Heart left ventricle (tissue), 16 donors: ENCODE measurements at regions of chr2 and their contacts with region 1.

Region 1: GRCh38 chr2:36777788-36778187 is 81.3 kb downstream of the VIT start:
- DNase-seq: no peak
- ATAC-seq: peak in 1 of 4 donors; percentile 7
- H3K4me3 ChIP-seq: no peak overlapping the region
- H3K27ac ChIP-seq: no peak overlapping the region
- H3K4me1 ChIP-seq: peaks cover 0 to 14% (median 0%) of the 10 kb centered on the region in 12 donors
- H3K27me3 ChIP-seq: no peaks in the 10 kb centered on the region
- CTCF ChIP-seq: no peak
- POLR2A ChIP-seq: no peak

Region 2: GRCh38 chr2:36348721-36349120 is 429.1 kb before region 1 on chr2:
- intact Hi-C with region 1: loop called in 4 of 10 experiments (anchors 5 to 10 kb)
- DNase-seq: no peak
- ATAC-seq: no peak
- H3K4me3 ChIP-seq: no peak overlapping the region
- H3K27ac ChIP-seq: no peak overlapping the region
- H3K4me1 ChIP-seq: peaks cover 0 to 15% (median 6%) of the 10 kb centered on the region in 12 donors
- H3K27me3 ChIP-seq: peaks cover 0 to 4% (median 0%) of the 10 kb centered on the region in 9 donors
- CTCF ChIP-seq: no peak
- POLR2A ChIP-seq: no peak